ENCODE measurements at regions of chr4 and their contacts with region 1.

Region 1: GRCh38 chr4:14368391-14368790 is 633.9 kb upstream of the CPEB2 start:
- DNase-seq: no peak
- ATAC-seq: no peak
- H3K4me3 Mint-ChIP-seq: no peak overlapping the region
- H3K27ac Mint-ChIP-seq: no peak overlapping the region
- H3K4me1 Mint-ChIP-seq: no peaks in the 10 kb centered on the region
- H3K27me3 Mint-ChIP-seq: no peaks in the 10 kb centered on the region

Region 2: DNA sequence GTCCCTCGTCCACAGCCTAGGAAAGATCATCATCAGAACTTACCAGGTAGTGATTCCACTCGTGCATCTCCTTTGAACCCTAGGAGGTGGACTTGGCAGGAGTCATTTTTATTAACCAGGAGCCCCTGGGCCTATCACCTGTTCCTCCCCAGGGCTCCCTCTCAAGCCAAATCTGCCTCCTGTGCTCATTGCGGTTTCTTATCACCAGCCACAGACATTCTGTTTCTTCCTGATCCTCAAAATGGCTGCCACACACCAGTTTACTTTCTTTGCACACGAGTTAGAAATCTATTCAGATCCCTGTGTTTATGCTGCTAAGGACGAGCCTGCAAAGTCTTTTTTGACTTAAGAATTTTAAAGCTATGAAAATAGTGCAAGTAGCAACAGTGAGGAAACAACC is 386.4 kb before region 1 on chr4:
- CTCF ChIA-PET with region 1: no interaction called
- POLR2A ChIA-PET with region 1: interaction called, 11 read pairs
- DNase-seq: no peak
- ATAC-seq: no peak
- H3K4me3 Mint-ChIP-seq: no peak overlapping the region
- H3K27ac Mint-ChIP-seq: no peak overlapping the region
- H3K4me1 Mint-ChIP-seq: peaks cover 5% of the 10 kb centered on the region
- H3K27me3 Mint-ChIP-seq: no peaks in the 10 kb centered on the region

Region 3: GRCh38 chr4:14345356-14345775 is 23.0 kb before region 1 on chr4:
- CTCF ChIA-PET with region 1: no interaction called
- POLR2A ChIA-PET with region 1: no interaction called
- DNase-seq: no peak
- ATAC-seq: no peak
- H3K4me3 Mint-ChIP-seq: no peak overlapping the region
- H3K27ac Mint-ChIP-seq: no peak overlapping the region
- H3K4me1 Mint-ChIP-seq: no peaks in the 10 kb centered on the region
- H3K27me3 Mint-ChIP-seq: no peaks in the 10 kb centered on the region

Region 4: DNA sequence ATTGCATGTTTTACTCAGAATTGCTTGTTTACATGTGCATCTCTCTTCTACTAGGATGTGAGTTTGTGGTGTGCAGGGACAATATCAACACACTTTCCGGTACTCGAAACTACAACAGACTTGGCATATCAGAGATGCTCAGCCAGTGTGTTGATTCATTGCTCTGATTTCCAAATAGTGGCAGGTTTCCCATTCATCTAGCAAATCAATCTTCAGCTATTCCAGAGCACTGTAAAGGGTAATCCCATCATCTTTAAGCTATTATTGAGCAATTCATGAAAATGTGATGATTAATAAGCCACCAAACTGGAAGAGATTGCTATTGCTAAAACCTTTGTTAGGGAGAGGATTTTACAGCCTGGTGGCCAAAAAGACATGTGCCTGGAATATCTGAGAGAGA is 59.7 kb after region 1 on chr4:
- CTCF ChIA-PET with region 1: no interaction called
- POLR2A ChIA-PET with region 1: no interaction called
- DNase-seq: no peak
- ATAC-seq: no peak
- H3K4me3 Mint-ChIP-seq: no peak overlapping the region
- H3K27ac Mint-ChIP-seq: no peak overlapping the region
- H3K4me1 Mint-ChIP-seq: peaks cover 1% of the 10 kb centered on the region
- H3K27me3 Mint-ChIP-seq: no peaks in the 10 kb centered on the region

Region 5: GRCh38 chr4:14478504-14478903 is 110.1 kb after region 1 on chr4:
- CTCF ChIA-PET with region 1: no interaction called
- POLR2A ChIA-PET with region 1: no interaction called
- DNase-seq: no peak
- ATAC-seq: no peak
- H3K4me3 Mint-ChIP-seq: no peak overlapping the region
- H3K27ac Mint-ChIP-seq: no peak overlapping the region
- H3K4me1 Mint-ChIP-seq: no peaks in the 10 kb centered on the region
- H3K27me3 Mint-ChIP-seq: no peaks in the 10 kb centered on the region